ENCODE measurements at regions of chr3 and their contacts with region 1.

Region 1: DNA sequence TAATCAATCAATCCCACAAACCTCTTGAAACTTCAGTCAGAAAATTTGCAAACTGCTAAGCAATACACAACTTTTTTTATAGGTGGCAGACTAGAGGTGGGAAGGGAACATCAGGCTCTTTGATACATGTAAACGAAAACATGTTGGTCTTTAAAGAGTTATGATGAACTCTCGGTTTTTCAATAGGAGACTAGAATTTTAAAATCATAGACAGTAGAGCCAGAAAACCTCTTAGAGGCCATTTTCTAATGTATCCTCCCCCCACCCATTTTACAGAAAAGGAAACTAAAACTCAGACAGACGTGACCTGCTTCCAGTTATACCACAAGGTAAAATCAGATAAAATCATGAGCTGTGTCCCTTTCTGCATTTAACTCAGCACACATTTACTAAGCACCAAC is 179.1 kb upstream of the LPP start:
- DNase-seq: no peak
- ATAC-seq: peak; percentile 10
- H3K4me3 Mint-ChIP-seq: peak overlapping the region; percentile 74
- H3K27ac Mint-ChIP-seq: peak overlapping the region; percentile 81
- H3K4me1 Mint-ChIP-seq: peaks cover 61% of the 10 kb centered on the region
- H3K27me3 Mint-ChIP-seq: peaks cover 5% of the 10 kb centered on the region
- CTCF ChIP-seq: no peak

Region 2: GRCh38 chr3:187935623-187936156 is 39.2 kb before region 1 on chr3:
- CTCF ChIA-PET with region 1: interaction called, 4 read pairs
- POLR2A ChIA-PET with region 1: interaction called, 4 read pairs
- intact Hi-C with region 1: loop called (anchors 2 kb)
- DNase-seq: peak; percentile 61
- ATAC-seq: peak; percentile 91
- H3K4me3 Mint-ChIP-seq: peak overlapping the region; percentile 77
- H3K27ac Mint-ChIP-seq: peak overlapping the region; percentile 90
- H3K4me1 Mint-ChIP-seq: peaks cover 31% of the 10 kb centered on the region
- H3K27me3 Mint-ChIP-seq: peaks cover 33% of the 10 kb centered on the region
- CTCF ChIP-seq: no peak

Region 3: GRCh38 chr3:188000361-188000861 is 25.5 kb after region 1 on chr3:
- CTCF ChIA-PET with region 1: no interaction called
- POLR2A ChIA-PET with region 1: interaction called, 3 read pairs
- intact Hi-C with region 1: loop called (anchors 2 kb)
- DNase-seq: no peak
- ATAC-seq: no peak
- H3K4me3 Mint-ChIP-seq: peak overlapping the region; percentile 3
- H3K27ac Mint-ChIP-seq: peak overlapping the region; percentile 73
- H3K4me1 Mint-ChIP-seq: peaks cover 22% of the 10 kb centered on the region
- H3K27me3 Mint-ChIP-seq: peaks cover 2% of the 10 kb centered on the region
- CTCF ChIP-seq: no peak

Region 4: GRCh38 chr3:188108703-188109412 is 134.0 kb after region 1 on chr3:
- CTCF ChIA-PET with region 1: no interaction called
- POLR2A ChIA-PET with region 1: no interaction called
- intact Hi-C with region 1: loop called (anchors 2 kb)
- DNase-seq: no peak
- ATAC-seq: peak; percentile 73
- H3K4me3 Mint-ChIP-seq: peak overlapping the region; percentile 42
- H3K27ac Mint-ChIP-seq: peak overlapping the region; percentile 78
- H3K4me1 Mint-ChIP-seq: peaks cover 26% of the 10 kb centered on the region
- H3K27me3 Mint-ChIP-seq: no peaks in the 10 kb centered on the region
- CTCF ChIP-seq: no peak

Region 5: DNA sequence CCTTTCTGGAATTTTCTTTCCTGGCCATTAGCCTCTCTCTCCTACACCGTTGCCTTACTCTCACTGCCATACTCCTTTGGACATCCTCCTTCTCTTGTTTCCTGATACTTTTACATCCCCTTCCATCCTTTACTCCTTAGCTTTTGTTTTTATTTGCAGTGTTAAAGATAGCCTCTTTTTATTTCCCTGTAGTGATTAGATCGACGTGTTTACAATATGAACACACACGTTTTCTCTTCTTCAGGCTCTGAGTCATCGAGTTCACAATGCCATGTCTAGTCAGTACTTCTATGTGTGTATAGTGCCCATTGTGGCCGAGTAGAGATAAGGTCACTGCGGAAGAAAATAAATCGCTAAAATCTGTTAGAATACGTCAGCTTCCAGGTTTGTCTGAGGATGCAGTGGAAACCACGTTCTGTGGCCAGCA is 387.5 kb after region 1 on chr3:
- CTCF ChIA-PET with region 1: no interaction called
- POLR2A ChIA-PET with region 1: interaction called, 6 read pairs
- intact Hi-C with region 1: loop called (anchors 5 kb)
- DNase-seq: no peak
- ATAC-seq: peak; percentile 63
- H3K4me3 Mint-ChIP-seq: peak overlapping the region; percentile 24
- H3K27ac Mint-ChIP-seq: peak overlapping the region; percentile 80
- H3K4me1 Mint-ChIP-seq: peaks cover 78% of the 10 kb centered on the region
- H3K27me3 Mint-ChIP-seq: no peaks in the 10 kb centered on the region
- CTCF ChIP-seq: no peak

Region 6: GRCh38 chr3:188697127-188697526 is 722.3 kb after region 1 on chr3:
- CTCF ChIA-PET with region 1: no interaction called
- POLR2A ChIA-PET with region 1: interaction called, 16 read pairs
- intact Hi-C with region 1: loop called (anchors 10 kb)
- DNase-seq: no peak
- ATAC-seq: peak; percentile 80
- H3K4me3 Mint-ChIP-seq: peak overlapping the region; percentile 20
- H3K27ac Mint-ChIP-seq: peak overlapping the region; percentile 86
- H3K4me1 Mint-ChIP-seq: peaks cover 72% of the 10 kb centered on the region
- H3K27me3 Mint-ChIP-seq: no peaks in the 10 kb centered on the region
- CTCF ChIP-seq: no peak

Measured in activated B cell treated with CpG ODN at 0.5 μM for 24 hours (primary cell).